ENCODE measurements at regions of chr10 and their contacts with region 1.

Region 1: GRCh38 chr10:43671656-43672531 is 23.2 kb upstream of the ZNF32 start:
- DNase-seq: peak in 3 of 5 donors; percentile 52 to 64 (median 52)
- ATAC-seq: peak; percentile 67 to 76 (median 69)
- H3K4me3 ChIP-seq: no peak overlapping the region
- H3K27ac ChIP-seq: no peak overlapping the region
- H3K4me1 ChIP-seq: peaks cover 0 to 20% (median 8%) of the 10 kb centered on the region in 12 donors
- H3K27me3 ChIP-seq: peaks cover 0 to 17% (median 11%) of the 10 kb centered on the region in 9 donors
- CTCF ChIP-seq: peak; percentile 71 to 89 (median 80)
- POLR2A ChIP-seq: no peak

Region 2: GRCh38 chr10:43843321-43844101 is 171.6 kb after region 1 on chr10:
- intact Hi-C with region 1: no loop called
- DNase-seq: peak in 2 of 5 donors; percentile 57 to 65
- ATAC-seq: peak; percentile 12 to 66 (median 53)
- H3K4me3 ChIP-seq: no peak overlapping the region
- H3K27ac ChIP-seq: peak overlapping the region in 5 of 12 donors; percentile 2 to 52 (median 31)
- H3K4me1 ChIP-seq: peaks cover 0 to 36% (median 15%) of the 10 kb centered on the region in 12 donors
- H3K27me3 ChIP-seq: no peaks in the 10 kb centered on the region
- CTCF ChIP-seq: no peak
- POLR2A ChIP-seq: no peak

Region 3: GRCh38 chr10:43913676-43914385 is 241.9 kb after region 1 on chr10:
- intact Hi-C with region 1: no loop called
- DNase-seq: no peak
- ATAC-seq: no peak
- H3K4me3 ChIP-seq: no peak overlapping the region
- H3K27ac ChIP-seq: no peak overlapping the region
- H3K4me1 ChIP-seq: peaks cover 4 to 29% (median 19%) of the 10 kb centered on the region in 12 donors
- H3K27me3 ChIP-seq: no peaks in the 10 kb centered on the region
- CTCF ChIP-seq: no peak
- POLR2A ChIP-seq: no peak

Region 4: GRCh38 chr10:44864637-44865288 is 1192.9 kb after region 1 on chr10:
- intact Hi-C with region 1: loop called (anchors 1 to 5 kb)
- DNase-seq: peak; percentile 89 to 95 (median 91)
- ATAC-seq: peak; percentile 93 to 97 (median 96)
- H3K4me3 ChIP-seq: peak overlapping the region; percentile 16 to 63 (median 52)
- H3K27ac ChIP-seq: peak overlapping the region in 10 of 12 donors; percentile 4 to 68 (median 56)
- H3K4me1 ChIP-seq: peaks cover 0 to 37% (median 14%) of the 10 kb centered on the region in 12 donors
- H3K27me3 ChIP-seq: peaks cover 0 to 12% (median 0%) of the 10 kb centered on the region in 9 donors
- CTCF ChIP-seq: peak in 11 of 12 donors; percentile 95 to 99 (median 97)
- POLR2A ChIP-seq: peak in 1 of 2 donors; percentile 11

Measured in heart left ventricle (tissue), 16 donors.